Caco-2 (cell line): ENCODE measurements at regions of chr3 and their contacts with region 1.

Region 1: GRCh38 chr3:143054011-143054410 is 52.6 kb downstream of the U2SURP start:
- DNase-seq: no peak
- H3K4me3 ChIP-seq: no peak overlapping the region
- H3K4me3 Mint-ChIP-seq: no peak overlapping the region
- H3K27ac Mint-ChIP-seq: no peak overlapping the region
- H3K4me1 ChIP-seq: no peaks in the 10 kb centered on the region
- H3K4me1 Mint-ChIP-seq: no peaks in the 10 kb centered on the region
- H3K27me3 ChIP-seq: no peaks in the 10 kb centered on the region
- H3K27me3 Mint-ChIP-seq: no peaks in the 10 kb centered on the region
- CTCF ChIP-seq: no peak

Region 2: GRCh38 chr3:142976621-142977398 is 77.2 kb before region 1 on chr3:
- CTCF ChIA-PET with region 1: no interaction called
- POLR2A ChIA-PET with region 1: no interaction called
- intact Hi-C with region 1: no loop called
- DNase-seq: no peak
- H3K4me3 ChIP-seq: no peak overlapping the region
- H3K4me3 Mint-ChIP-seq: no peak overlapping the region
- H3K27ac Mint-ChIP-seq: no peak overlapping the region
- H3K4me1 ChIP-seq: no peaks in the 10 kb centered on the region
- H3K4me1 Mint-ChIP-seq: no peaks in the 10 kb centered on the region
- H3K27me3 ChIP-seq: no peaks in the 10 kb centered on the region
- H3K27me3 Mint-ChIP-seq: peaks cover 18% of the 10 kb centered on the region
- CTCF ChIP-seq: no peak

Region 3: GRCh38 chr3:143040261-143040879 is 13.6 kb before region 1 on chr3:
- CTCF ChIA-PET with region 1: no interaction called
- POLR2A ChIA-PET with region 1: no interaction called
- intact Hi-C with region 1: loop called (anchors 1 kb)
- DNase-seq: no peak
- H3K4me3 ChIP-seq: no peak overlapping the region
- H3K4me3 Mint-ChIP-seq: no peak overlapping the region
- H3K27ac Mint-ChIP-seq: no peak overlapping the region
- H3K4me1 ChIP-seq: peaks cover 21% of the 10 kb centered on the region
- H3K4me1 Mint-ChIP-seq: peaks cover 15% of the 10 kb centered on the region
- H3K27me3 ChIP-seq: no peaks in the 10 kb centered on the region
- H3K27me3 Mint-ChIP-seq: no peaks in the 10 kb centered on the region
- CTCF ChIP-seq: peak in 1 of 2 experiments; percentile 38